CD4-positive, alpha-beta memory T cell (primary cell): ENCODE measurements at regions of chr12 and their contacts with region 1.

Region 1: DNA sequence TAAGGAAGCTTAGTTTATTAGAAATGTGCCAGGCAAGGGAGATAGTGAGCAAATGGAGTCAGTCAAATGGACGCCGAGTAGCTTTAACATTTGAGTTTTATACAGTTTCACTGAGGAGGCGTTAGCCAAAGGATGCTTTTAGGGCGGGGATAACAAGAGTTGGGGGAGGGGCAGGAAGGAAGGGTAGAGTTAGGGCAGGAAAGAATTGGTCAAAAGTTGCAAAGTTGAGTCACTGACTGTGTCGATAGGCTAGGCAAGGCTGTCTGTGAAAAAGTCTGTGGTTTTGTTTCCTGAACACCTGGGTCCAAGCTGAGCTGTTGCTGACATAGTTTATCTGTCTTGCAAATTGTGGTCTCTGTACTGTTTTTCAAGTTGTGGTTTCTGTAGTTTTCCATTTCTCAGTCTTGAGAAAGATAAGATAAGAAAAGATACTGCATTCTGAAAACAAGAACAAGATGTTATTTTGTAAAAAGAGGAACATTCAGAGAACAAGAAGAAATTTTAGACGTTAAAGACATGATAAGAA is 62.6 kb upstream of the RESF1 start:
- DNase-seq: peak; percentile 88 to 95 (median 94)
- H3K4me3 ChIP-seq: peak overlapping the region; percentile 9 to 22
- H3K4me3 Mint-ChIP-seq: peak overlapping the region; percentile 63 to 88 (median 74)
- H3K27ac ChIP-seq: peak overlapping the region; percentile 55
- H3K27ac Mint-ChIP-seq: peak overlapping the region; percentile 91 to 99 (median 97)
- H3K4me1 ChIP-seq: peaks cover 75% of the 10 kb centered on the region
- H3K4me1 Mint-ChIP-seq: peaks cover 34 to 78% (median 49%) of the 10 kb centered on the region in 4 donors
- H3K27me3 ChIP-seq: no peaks in the 10 kb centered on the region
- H3K27me3 Mint-ChIP-seq: no peaks in the 10 kb centered on the region

Region 2: GRCh38 chr12:31682136-31682962 is 214.2 kb before region 1 on chr12:
- CTCF ChIA-PET with region 1: interaction called, 5 read pairs
- POLR2A ChIA-PET with region 1: interaction called, 3 read pairs
- intact Hi-C with region 1: loop called (anchors 2 kb)
- DNase-seq: peak; percentile 68 to 73 (median 71)
- H3K4me3 ChIP-seq: no peak overlapping the region
- H3K4me3 Mint-ChIP-seq: peak overlapping the region in 4 of 8 donors; percentile 58 to 80 (median 71)
- H3K27ac ChIP-seq: no peak overlapping the region
- H3K27ac Mint-ChIP-seq: peak overlapping the region; percentile 53 to 92 (median 88)
- H3K4me1 ChIP-seq: no peaks in the 10 kb centered on the region
- H3K4me1 Mint-ChIP-seq: peaks cover 6 to 15% (median 9%) of the 10 kb centered on the region in 4 donors
- H3K27me3 ChIP-seq: no peaks in the 10 kb centered on the region
- H3K27me3 Mint-ChIP-seq: no peaks in the 10 kb centered on the region

Region 3: DNA sequence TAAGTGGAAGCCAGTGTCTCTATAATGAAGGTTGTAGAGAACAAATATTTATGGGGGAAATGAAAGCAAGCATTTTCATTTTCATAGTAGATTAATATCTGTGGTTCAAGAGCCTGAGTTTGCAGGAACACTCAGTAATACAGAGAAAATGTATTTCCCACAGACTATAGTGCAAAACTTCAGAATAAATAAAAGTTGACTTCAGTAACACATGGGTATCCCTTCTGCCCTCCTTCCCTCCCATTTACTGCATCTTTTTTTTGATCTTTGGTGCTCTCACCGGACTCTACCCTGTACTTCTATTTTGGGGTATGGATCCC is 92.4 kb before region 1 on chr12:
- CTCF ChIA-PET with region 1: interaction called, 8 read pairs
- POLR2A ChIA-PET with region 1: interaction called, 7 read pairs
- intact Hi-C with region 1: loop called (anchors 1 kb)
- DNase-seq: no peak
- H3K4me3 ChIP-seq: no peak overlapping the region
- H3K4me3 Mint-ChIP-seq: peak overlapping the region; percentile 70 to 95 (median 83)
- H3K27ac ChIP-seq: no peak overlapping the region
- H3K27ac Mint-ChIP-seq: peak overlapping the region; percentile 75 to 94 (median 90)
- H3K4me1 ChIP-seq: peaks cover 37% of the 10 kb centered on the region
- H3K4me1 Mint-ChIP-seq: peaks cover 35 to 62% (median 50%) of the 10 kb centered on the region in 4 donors
- H3K27me3 ChIP-seq: no peaks in the 10 kb centered on the region
- H3K27me3 Mint-ChIP-seq: no peaks in the 10 kb centered on the region

Region 4: GRCh38 chr12:31859232-31859977 is 37.2 kb before region 1 on chr12:
- CTCF ChIA-PET with region 1: no interaction called
- POLR2A ChIA-PET with region 1: no interaction called
- intact Hi-C with region 1: no loop called
- DNase-seq: no peak
- H3K4me3 ChIP-seq: no peak overlapping the region
- H3K4me3 Mint-ChIP-seq: no peak overlapping the region
- H3K27ac ChIP-seq: no peak overlapping the region
- H3K27ac Mint-ChIP-seq: peak overlapping the region in 3 of 7 donors; percentile 32 to 68 (median 52)
- H3K4me1 ChIP-seq: peaks cover 5% of the 10 kb centered on the region
- H3K4me1 Mint-ChIP-seq: peaks cover 5 to 16% (median 9%) of the 10 kb centered on the region in 4 donors
- H3K27me3 ChIP-seq: no peaks in the 10 kb centered on the region
- H3K27me3 Mint-ChIP-seq: no peaks in the 10 kb centered on the region

Region 5: DNA sequence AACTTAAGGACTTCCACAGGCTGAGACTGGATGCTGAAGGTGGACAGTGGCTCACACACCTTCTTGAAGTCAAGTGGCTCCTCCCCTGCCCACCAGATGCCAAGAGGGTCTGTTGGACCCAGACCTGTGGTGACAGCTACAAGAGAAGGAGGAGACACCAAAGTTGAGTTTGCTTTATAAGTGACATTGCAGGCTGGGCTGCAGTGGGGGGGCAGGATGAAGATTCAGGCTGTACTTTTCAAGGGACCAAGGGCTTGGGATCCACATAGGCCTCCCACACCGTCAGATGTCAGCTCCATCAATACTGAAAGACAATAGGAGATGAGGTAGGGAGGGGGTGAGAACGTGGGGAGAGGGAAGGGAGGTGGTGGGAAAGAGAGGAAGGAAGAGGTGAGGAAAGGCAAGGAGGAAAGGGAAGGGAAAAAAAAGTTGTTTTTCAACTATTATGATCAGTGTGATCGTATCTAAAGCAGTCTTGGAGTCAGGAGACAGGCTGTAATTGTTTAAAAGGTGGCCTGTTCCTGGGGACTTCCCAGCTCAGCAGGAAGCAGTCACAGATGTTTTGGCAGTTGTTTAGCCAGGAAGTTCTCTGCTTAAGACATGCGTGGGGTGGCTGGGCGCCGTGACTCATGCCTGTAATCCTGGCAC is 21.5 kb before region 1 on chr12:
- CTCF ChIA-PET with region 1: interaction called, 3 read pairs
- POLR2A ChIA-PET with region 1: interaction called, 44 read pairs
- intact Hi-C with region 1: loop called (anchors 1 kb)
- DNase-seq: peak; percentile 62 to 88 (median 73)
- H3K4me3 ChIP-seq: peak overlapping the region in 1 of 2 donors; percentile 9
- H3K4me3 Mint-ChIP-seq: peak overlapping the region in 7 of 8 donors; percentile 27 to 81 (median 75)
- H3K27ac ChIP-seq: peak overlapping the region; percentile 77
- H3K27ac Mint-ChIP-seq: peak overlapping the region; percentile 95 to 99 (median 98)
- H3K4me1 ChIP-seq: peaks cover 33% of the 10 kb centered on the region
- H3K4me1 Mint-ChIP-seq: peaks cover 31 to 64% (median 49%) of the 10 kb centered on the region in 4 donors
- H3K27me3 ChIP-seq: no peaks in the 10 kb centered on the region
- H3K27me3 Mint-ChIP-seq: no peaks in the 10 kb centered on the region

Region 6: DNA sequence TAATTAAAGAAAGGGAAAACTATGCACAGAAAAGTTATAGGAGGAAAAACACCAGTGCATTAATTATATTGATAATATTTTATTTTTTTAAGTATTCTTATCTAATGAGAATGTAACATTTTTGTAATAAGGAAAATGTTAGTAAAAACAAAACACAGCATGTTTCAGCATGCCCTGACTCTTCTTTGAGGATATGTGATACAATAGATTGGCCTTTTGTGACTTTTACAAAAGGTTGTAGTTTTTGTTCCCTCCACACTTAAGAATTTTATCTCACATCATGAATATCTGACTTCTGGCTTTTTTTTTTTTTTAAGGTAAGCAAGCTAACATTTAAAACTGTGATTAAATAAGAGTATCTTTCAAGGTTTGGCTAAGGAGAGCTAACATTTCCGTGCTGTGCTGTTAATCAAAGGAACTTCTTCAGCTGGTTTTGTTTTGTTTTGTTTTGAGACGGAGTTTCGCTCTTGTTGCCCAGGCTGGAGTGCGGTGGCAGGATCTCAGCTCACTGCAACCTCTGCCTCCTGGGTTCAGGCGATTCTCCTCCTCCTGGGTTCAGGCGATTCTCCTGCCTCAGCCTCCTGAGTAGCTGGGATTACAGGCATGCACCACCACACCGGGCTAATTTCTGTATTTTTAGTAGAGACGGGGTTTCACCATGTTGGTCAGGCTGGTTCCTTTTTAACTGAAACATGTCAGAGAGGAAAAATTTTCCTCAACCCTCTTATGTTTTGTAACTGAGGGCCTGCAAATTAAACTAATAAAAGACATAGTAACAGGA is 31.9 kb after region 1 on chr12:
- CTCF ChIA-PET with region 1: interaction called, 6 read pairs
- POLR2A ChIA-PET with region 1: interaction called, 14 read pairs
- intact Hi-C with region 1: loop called (anchors 1 kb)
- DNase-seq: peak in 4 of 5 donors; percentile 41 to 58 (median 50)
- H3K4me3 ChIP-seq: peak overlapping the region in 1 of 2 donors; percentile 22
- H3K4me3 Mint-ChIP-seq: peak overlapping the region; percentile 86 to 95 (median 90)
- H3K27ac ChIP-seq: peak overlapping the region; percentile 56
- H3K27ac Mint-ChIP-seq: peak overlapping the region; percentile 96 to 99 (median 97)
- H3K4me1 ChIP-seq: peaks cover 47% of the 10 kb centered on the region
- H3K4me1 Mint-ChIP-seq: peaks cover 43 to 61% (median 52%) of the 10 kb centered on the region in 4 donors
- H3K27me3 ChIP-seq: no peaks in the 10 kb centered on the region
- H3K27me3 Mint-ChIP-seq: no peaks in the 10 kb centered on the region